ENCODE measurements at regions of chr9 and their contacts with region 1.

Region 1: GRCh38 chr9:101458955-101459631 is 23.5 kb upstream of the ALDOB start:
- DNase-seq: peak in 4 of 7 donors; percentile 32 to 47 (median 36)
- H3K4me3 ChIP-seq: no peak overlapping the region
- H3K27ac ChIP-seq: no peak overlapping the region
- H3K4me1 ChIP-seq: peaks cover 0 to under 1% of the 10 kb centered on the region in 2 donors
- H3K27me3 ChIP-seq: no peaks in the 10 kb centered on the region
- CTCF ChIP-seq: peak; percentile 38 to 87 (median 77)
- POLR2A ChIP-seq: no peak

Region 2: DNA sequence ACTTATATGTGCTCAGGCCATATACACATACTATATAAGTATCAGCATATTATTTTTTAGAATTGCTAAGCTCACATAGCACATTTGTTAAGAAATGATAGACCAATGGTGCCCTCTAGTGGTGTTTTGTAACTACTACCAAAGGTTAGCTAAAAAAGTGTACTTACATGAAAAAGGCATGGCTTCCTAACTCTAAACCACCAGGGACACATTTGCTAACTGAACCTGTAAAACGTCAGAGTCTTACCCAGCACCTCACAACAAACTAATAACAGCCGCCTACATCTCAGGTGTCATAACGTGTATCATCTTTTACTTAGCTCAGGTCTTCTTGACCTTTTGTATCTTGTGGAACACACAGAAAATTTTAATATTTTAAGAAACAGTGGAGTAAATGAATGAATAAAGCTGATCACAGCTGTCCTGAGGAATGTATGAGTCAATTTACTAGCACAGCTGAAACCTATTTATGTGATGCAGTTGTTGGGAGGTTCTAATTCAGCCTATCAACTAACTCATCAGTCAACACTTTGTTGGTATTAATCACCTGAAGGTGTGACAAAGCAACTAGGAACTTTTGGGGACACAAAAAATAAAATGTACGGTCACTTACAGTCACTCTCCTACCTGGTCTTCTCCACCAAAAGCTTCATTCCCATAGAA is 147.2 kb before region 1 on chr9:
- intact Hi-C with region 1: no loop called
- DNase-seq: peak in 3 of 7 donors; percentile 12 to 32 (median 22)
- H3K4me3 ChIP-seq: no peak overlapping the region
- H3K27ac ChIP-seq: no peak overlapping the region
- H3K4me1 ChIP-seq: no peaks in the 10 kb centered on the region
- H3K27me3 ChIP-seq: no peaks in the 10 kb centered on the region
- CTCF ChIP-seq: peak; percentile 68 to 76 (median 73)
- POLR2A ChIP-seq: no peak

Region 3: DNA sequence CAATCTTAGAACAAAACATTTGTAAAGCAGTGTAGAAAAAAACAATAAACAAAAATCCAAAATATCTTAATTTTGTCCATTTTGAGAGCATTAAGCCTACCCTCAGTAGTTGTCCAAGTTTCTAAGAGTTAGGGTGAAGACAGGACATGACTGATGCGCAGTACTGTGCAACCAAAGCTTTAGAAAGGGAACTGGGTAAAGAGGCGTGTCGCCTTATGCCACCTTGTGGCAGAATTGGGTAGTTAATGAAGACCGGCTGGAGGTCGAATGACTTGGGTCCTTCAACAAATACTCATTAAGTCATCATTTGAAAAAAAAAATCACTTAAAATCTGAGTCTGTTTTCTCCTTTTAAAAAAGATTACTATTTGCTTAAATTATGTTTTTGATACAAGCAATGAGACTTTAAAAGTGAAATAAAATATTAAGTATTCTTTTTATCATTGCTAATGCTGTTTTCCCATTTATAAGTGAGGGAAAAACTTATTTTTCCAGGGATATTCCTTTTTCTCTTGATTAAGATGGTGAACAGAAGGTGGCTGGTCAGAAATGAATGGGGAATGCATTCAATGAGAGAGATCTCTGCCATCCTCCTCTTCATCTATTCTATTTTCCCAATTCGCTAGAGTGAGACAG is 71.1 kb after region 1 on chr9:
- intact Hi-C with region 1: loop called in 1 of 2 experiments (anchors 2 kb)
- DNase-seq: peak; percentile 71 to 92 (median 76)
- H3K4me3 ChIP-seq: no peak overlapping the region
- H3K27ac ChIP-seq: no peak overlapping the region
- H3K4me1 ChIP-seq: peaks cover 7 to 10% of the 10 kb centered on the region in 2 donors
- H3K27me3 ChIP-seq: no peaks in the 10 kb centered on the region
- CTCF ChIP-seq: peak; percentile 76 to 93 (median 86)
- POLR2A ChIP-seq: no peak

Region 4: GRCh38 chr9:101652601-101653175 is 193.6 kb after region 1 on chr9:
- intact Hi-C with region 1: no loop called
- DNase-seq: no peak
- H3K4me3 ChIP-seq: no peak overlapping the region
- H3K27ac ChIP-seq: no peak overlapping the region
- H3K4me1 ChIP-seq: no peaks in the 10 kb centered on the region
- H3K27me3 ChIP-seq: no peaks in the 10 kb centered on the region
- CTCF ChIP-seq: no peak
- POLR2A ChIP-seq: no peak